Heart right ventricle (tissue), 16 donors: ENCODE measurements at regions of chr2 and their contacts with region 1.

Region 1: GRCh38 chr2:54455563-54456361 is at the start of gene SPTBN1:
- DNase-seq: peak; percentile 94 to 95
- ATAC-seq: peak; percentile 91 to 96 (median 94)
- H3K4me3 ChIP-seq: peak within 1 kb of the TSS; percentile 55 to 87 (median 79)
- H3K27ac ChIP-seq: peak within 1 kb of the TSS; percentile 92 to 99 (median 98)
- H3K4me1 ChIP-seq: peaks cover 7 to 45% (median 34%) of the 10 kb centered on the region in 9 donors
- H3K27me3 ChIP-seq: peaks cover 0 to 52% (median 0%) of the 10 kb centered on the region in 7 donors
- CTCF ChIP-seq: peak in 1 of 9 donors; percentile 5
- total RNA-seq, gene SPTBN1: 366 to 643 (median 507) TPM

Region 2: DNA sequence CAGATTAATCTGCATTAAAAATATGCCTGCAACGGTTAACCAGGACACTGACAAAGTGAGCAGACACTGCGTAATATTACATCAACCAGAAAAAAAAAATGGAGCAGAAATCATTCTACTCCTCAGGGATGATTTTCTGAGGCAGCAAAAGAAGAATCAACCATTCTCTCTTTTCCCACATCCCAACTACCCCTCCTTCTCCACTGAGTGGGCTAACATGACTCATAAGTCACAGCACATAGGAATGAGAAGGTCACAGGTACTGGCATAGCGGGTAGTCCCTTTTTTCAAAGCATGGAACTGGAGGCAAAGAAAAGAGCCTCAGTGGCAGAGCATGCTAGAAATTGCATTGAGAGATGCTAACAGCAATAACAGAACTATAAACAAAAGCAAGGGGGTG is 145.5 kb before region 1 on chr2:
- intact Hi-C with region 1: no loop called
- DNase-seq: no peak
- ATAC-seq: peak in 3 of 8 donors; percentile 56 to 64 (median 58)
- H3K4me3 ChIP-seq: no peak overlapping the region
- H3K27ac ChIP-seq: no peak overlapping the region
- H3K4me1 ChIP-seq: peaks cover 0 to 7% (median 0%) of the 10 kb centered on the region in 9 donors
- H3K27me3 ChIP-seq: no peaks in the 10 kb centered on the region
- CTCF ChIP-seq: no peak

Region 3: DNA sequence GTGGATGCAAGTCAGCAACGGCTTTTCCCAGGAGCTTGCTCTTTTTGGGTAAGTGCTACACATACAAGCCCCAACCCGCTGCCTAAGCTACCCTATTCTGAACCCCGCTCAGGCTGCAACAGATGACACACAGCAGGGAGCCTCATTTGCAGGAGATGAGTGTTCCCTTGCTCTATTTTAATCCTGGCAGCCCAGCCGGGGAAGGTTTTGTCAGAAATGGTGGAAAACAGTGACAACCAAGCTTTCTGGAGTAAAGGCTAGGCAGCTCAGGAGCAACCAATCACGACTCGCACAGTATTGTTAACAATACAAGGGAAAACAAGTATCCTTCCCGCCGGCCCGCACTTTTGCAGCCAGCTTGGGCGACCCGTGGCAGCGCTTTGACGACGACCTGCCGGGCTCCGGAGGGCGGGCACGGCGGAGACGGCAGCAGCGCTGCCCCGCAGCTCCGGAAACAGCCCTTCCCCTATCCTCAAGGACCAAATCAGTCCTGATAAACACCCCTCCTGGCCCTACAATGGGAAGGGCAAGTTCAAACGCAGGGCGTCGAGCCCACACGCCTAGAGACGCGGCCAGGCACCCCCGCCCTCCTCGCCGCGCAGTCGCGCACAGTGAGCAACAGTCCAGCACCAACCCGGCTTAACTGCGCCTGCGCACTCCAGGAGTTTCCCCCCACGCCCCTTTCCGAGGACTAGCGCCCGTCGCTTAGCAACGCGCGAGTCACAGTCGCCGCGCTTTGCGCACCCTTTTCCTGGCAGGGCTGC is 125.4 kb before region 1 on chr2:
- intact Hi-C with region 1: loop called in 4 of 10 experiments (anchors 5 to 10 kb)
- DNase-seq: peak; percentile 98
- ATAC-seq: peak; percentile 98 to 99 (median 99)
- H3K4me3 ChIP-seq: peak overlapping the region; percentile 9 to 74 (median 62)
- H3K27ac ChIP-seq: peak overlapping the region; percentile 75 to 97 (median 92)
- H3K4me1 ChIP-seq: peaks cover 2 to 26% (median 19%) of the 10 kb centered on the region in 9 donors
- H3K27me3 ChIP-seq: peaks cover 0 to 7% (median 0%) of the 10 kb centered on the region in 7 donors
- CTCF ChIP-seq: no peak

Region 4: GRCh38 chr2:54348646-54349045 is 107.1 kb before region 1 on chr2:
- intact Hi-C with region 1: loop called in 4 of 10 experiments (anchors 5 to 10 kb)
- DNase-seq: peak in 1 of 2 donors; percentile 70
- ATAC-seq: peak; percentile 52 to 94 (median 84)
- H3K4me3 ChIP-seq: no peak overlapping the region
- H3K27ac ChIP-seq: peak overlapping the region in 5 of 10 donors; percentile 41 to 58 (median 49)
- H3K4me1 ChIP-seq: peaks cover 0 to 19% (median 0%) of the 10 kb centered on the region in 9 donors
- H3K27me3 ChIP-seq: no peaks in the 10 kb centered on the region
- CTCF ChIP-seq: no peak

Region 5: DNA sequence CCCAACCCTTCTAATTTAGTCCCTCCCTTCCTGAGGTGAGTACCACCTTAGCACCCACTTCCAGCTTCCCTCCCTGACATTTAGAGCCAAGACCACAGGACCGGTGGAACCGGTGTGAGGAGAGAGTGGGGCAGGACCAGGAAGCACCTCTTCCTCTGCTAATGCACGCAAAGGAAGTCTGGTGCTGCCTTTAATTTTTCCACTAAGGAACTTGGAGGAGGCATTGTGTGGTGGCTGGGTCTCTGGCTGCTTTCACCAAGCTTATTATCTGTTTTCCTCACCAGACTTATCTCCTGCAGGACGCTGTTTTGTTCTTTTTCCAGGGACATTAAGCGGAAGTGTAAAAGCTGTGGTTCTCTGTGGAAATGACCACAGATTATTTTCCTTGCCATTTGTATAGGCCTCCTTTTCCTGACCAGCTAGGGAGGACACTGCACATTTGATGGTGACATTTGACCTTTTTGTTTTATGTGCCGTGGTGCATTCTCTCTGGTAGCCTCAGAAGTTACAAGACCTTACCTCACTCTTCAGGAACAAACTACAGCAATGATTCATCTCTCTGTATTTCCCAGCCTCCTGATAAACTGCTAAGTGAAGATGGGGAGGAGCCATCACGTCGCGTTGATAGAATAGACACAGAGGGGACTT is 39.5 kb before region 1 on chr2:
- intact Hi-C with region 1: loop called in 3 of 10 experiments (anchors 5 kb)
- DNase-seq: peak in 1 of 2 donors; percentile 59
- ATAC-seq: peak; percentile 71 to 86 (median 82)
- H3K4me3 ChIP-seq: no peak overlapping the region
- H3K27ac ChIP-seq: peak overlapping the region; percentile 21 to 88 (median 78)
- H3K4me1 ChIP-seq: peaks cover 12 to 62% (median 51%) of the 10 kb centered on the region in 9 donors
- H3K27me3 ChIP-seq: no peaks in the 10 kb centered on the region
- CTCF ChIP-seq: no peak

Region 6: GRCh38 chr2:54497763-54498680 is 42.3 kb after region 1 on chr2:
- intact Hi-C with region 1: loop called in 3 of 10 experiments (anchors 5 kb)
- DNase-seq: peak in 1 of 2 donors; percentile 44
- ATAC-seq: peak; percentile 45 to 71 (median 56)
- H3K4me3 ChIP-seq: no peak overlapping the region
- H3K27ac ChIP-seq: peak overlapping the region in 8 of 10 donors; percentile 5 to 72 (median 24)
- H3K4me1 ChIP-seq: peaks cover 35 to 100% (median 96%) of the 10 kb centered on the region in 9 donors
- H3K27me3 ChIP-seq: no peaks in the 10 kb centered on the region
- CTCF ChIP-seq: peak in 8 of 9 donors; percentile 30 to 63 (median 52)

Region 7: DNA sequence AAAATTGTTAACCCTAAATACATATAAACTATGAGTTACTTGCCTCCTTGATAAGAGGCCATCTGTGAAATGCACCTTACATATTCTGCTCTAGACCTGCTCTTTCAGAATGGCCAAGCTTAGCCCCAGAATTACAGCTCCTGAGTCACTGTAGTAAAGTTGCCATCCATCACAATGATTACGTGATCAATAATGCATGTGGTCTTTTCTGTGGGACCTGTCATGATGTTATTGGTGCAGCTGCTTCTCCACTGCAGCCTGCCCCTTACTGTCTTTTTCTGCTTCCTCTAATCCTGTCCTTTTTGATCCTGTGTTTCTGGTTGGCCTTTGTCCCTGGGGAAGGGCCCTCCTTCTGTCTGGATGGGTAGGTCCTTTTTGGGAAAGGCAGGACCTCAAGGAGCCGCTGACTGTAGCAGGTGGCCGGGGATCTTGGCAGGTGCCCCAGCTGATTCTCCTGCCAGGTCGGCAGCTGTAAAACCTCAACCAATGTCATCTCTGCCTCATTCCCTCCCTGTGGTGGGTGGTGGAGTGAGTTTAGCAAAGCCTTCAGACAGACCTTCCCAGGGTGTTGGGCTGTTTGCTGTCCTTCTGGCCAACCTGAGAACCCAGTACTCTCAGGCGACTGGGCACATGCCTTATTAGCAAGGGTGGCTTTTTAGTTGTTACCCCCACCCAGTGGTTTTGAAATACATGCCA is 141.5 kb after region 1 on chr2:
- intact Hi-C with region 1: no loop called
- DNase-seq: peak; percentile 72 to 75
- ATAC-seq: peak; percentile 46 to 63 (median 56)
- H3K4me3 ChIP-seq: no peak overlapping the region
- H3K27ac ChIP-seq: peak overlapping the region; percentile 37 to 89 (median 74)
- H3K4me1 ChIP-seq: peaks cover 54 to 99% (median 90%) of the 10 kb centered on the region in 9 donors
- H3K27me3 ChIP-seq: no peaks in the 10 kb centered on the region
- CTCF ChIP-seq: no peak